ENCODE measurements at regions of chr6 and their contacts with region 1.

Region 1: DNA sequence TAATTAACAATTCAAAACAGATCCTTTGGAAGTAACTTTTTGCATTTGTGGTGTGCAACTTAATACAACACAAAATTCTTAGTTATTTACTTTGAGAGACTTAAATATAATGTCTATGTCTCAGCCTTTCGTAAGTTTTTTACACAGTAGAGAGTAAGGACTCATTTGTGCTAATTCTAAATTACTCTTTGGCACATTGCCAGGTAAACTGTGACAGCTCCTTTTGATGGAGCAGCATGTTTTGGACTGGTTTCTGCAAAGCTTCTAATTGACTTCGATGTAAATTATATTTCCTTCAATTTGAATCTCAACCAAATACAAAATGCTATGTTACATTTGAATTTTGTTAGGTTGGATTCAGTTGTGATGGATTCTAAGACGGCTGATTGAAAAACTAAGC is 450.7 kb upstream of the OPRM1 start:
- DNase-seq: no peak
- H3K4me3 ChIP-seq: no peak overlapping the region
- H3K27ac ChIP-seq: no peak overlapping the region
- H3K4me1 ChIP-seq: no peaks in the 10 kb centered on the region
- H3K27me3 ChIP-seq: no peaks in the 10 kb centered on the region
- CTCF ChIP-seq: no peak
- EP300 ChIP-seq: no peak
- POLR2A ChIP-seq: no peak

Region 2: DNA sequence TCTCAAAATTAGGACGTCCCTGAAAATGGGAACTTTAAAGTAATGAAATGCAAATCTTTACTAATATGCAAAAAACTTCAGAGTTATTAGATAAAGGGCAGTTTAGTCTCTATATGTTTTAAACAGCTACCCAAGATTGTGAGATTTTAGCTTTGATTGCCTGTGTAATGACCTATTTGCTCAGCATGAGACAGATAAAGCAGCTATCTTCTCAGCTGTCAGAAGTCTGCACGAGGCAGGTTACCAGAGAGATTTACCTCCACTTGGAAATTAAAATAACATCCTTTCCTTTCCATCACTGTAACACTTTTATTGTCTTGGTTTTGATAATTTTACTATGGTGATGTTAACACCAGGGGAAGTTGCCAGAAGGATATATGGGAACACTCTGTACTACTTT is 14.1 kb after region 1 on chr6:
- in situ Hi-C with region 1: no loop called
- intact Hi-C with region 1: loop called (anchors 1 kb)
- DNase-seq: no peak
- H3K4me3 ChIP-seq: no peak overlapping the region
- H3K27ac ChIP-seq: no peak overlapping the region
- H3K4me1 ChIP-seq: no peaks in the 10 kb centered on the region
- H3K27me3 ChIP-seq: no peaks in the 10 kb centered on the region
- CTCF ChIP-seq: no peak
- EP300 ChIP-seq: no peak
- POLR2A ChIP-seq: no peak